Keratinocyte (primary cell): ENCODE measurements at regions of chr13 and their contacts with region 1.

Region 1: DNA sequence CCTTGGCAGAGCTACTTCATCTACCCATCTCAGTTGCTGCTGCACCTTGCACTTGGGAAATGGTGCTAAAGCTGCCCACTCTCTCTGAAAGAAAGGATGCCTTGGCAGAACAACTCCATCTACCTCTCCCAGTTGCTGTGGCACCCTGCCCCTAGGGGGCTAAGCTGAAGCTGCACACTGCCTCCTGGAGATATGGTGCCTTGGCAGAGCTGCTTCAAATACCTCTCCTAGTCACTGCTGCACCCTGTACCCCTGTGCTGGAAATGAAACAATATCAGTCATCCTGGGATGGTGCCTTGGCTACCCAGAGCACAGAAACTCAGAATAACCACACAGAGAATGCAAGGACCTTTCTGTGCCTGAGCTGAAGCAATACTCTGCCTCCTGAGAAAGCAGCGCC is 615.8 kb downstream of the DIAPH3 start:
- DNase-seq: no peak
- H3K4me3 ChIP-seq: no peak overlapping the region
- H3K27ac ChIP-seq: no peak overlapping the region
- H3K4me1 ChIP-seq: no peaks in the 10 kb centered on the region
- H3K27me3 ChIP-seq: no peaks in the 10 kb centered on the region
- CTCF ChIP-seq: no peak

Region 2: DNA sequence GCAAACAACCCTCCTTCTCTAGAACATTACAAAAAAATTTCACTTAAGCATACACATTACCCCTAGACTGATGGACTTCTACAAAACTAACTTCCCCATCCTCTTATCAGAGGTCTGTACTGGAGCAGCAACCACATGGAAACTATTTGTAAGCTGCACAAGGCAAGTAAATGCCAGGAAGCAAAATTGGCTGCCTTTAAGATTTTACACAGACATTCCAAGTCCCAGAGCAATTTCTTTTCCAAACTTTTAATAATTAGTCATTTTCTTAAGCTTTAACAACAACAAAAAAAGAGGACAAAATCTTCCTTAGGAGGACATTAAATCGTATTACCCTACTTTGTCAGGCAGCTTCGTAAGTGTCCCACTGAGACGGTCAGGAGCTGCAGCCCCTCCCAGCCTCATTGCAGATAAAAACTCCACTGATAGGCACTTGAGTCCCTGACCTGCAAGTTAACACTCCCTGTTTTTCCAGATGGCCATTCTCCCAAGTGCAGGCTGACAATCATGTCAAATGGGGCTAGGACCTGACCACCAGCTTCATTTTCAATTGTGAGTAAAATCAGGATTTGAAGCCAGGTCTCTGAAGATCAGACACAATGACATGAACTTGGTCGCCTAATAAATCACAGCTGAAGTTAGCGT is 64.3 kb before region 1 on chr13:
- dilution Hi-C with region 1: no loop called
- DNase-seq: no peak
- H3K4me3 ChIP-seq: no peak overlapping the region
- H3K27ac ChIP-seq: no peak overlapping the region
- H3K4me1 ChIP-seq: no peaks in the 10 kb centered on the region
- H3K27me3 ChIP-seq: no peaks in the 10 kb centered on the region
- CTCF ChIP-seq: no peak

Region 3: DNA sequence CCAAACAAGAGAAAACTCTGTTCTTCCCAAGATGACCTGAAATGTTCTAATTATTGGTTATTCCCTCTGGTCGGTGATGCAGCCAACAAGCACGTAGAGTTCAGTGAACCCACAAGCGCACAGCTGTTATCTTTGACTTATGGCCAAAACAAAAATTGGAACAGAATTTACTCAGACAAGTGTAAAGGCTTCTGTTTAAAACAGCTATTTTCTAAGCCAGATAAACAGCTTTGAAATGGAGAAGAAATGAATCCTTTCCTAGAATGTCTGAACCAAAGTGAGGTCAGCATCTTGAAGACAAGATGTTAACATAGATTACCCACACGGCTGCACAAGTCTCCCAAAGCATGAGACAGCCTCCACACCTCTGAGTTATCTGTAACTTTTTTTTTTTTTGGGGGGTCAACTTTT is 53.4 kb before region 1 on chr13:
- dilution Hi-C with region 1: loop called (anchors 10 kb)
- DNase-seq: no peak
- H3K4me3 ChIP-seq: no peak overlapping the region
- H3K27ac ChIP-seq: no peak overlapping the region
- H3K4me1 ChIP-seq: no peaks in the 10 kb centered on the region
- H3K27me3 ChIP-seq: no peaks in the 10 kb centered on the region
- CTCF ChIP-seq: no peak